CD4-positive, alpha-beta memory T cell (primary cell): ENCODE measurements at regions of chr5 and their contacts with region 1.

Region 1: DNA sequence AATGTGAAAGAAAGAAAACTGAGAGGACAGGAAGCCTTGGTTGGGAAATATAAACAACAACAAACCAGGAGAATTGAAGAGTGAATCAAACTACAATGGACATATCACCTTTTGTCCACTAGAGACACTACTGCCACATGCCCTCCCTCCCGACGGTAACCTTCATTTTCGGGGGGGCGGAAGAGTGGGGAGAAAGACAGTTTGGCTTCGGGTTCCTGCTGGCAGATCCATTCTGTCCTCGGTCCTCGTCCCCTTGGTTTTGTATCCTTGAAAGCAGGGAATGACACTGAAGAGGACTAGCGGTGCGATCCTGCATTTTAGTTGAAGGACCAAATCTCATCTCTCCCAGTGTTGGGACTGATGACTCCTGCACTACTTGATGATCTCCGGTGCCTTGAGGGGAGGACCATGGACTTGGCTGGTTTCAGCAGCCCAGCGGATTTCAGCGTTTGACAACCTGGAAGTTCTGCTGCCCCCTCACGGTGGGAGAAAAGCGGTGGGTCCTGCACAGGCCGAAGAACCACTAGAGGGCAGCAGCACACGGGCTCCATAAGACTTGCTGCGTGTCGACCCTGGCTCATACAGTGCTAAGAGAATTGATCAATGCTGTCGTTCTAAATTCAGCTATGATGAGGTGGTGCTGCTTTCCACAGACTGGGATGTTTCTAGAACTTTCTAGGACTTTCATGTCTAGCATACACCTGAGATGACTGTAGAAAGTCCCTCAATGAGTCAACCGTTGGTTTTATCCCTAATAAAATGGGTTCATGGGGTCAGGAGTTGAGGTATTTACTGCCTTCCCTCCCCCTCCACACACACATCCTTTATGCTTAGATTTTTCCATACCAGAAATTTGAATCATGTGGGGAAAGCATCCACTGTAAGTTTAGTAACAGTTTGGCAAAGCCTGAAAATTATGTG is 15.1 kb upstream of the ZNF131 start:
- DNase-seq: peak; percentile 87 to 90 (median 88)
- H3K4me3 ChIP-seq: peak overlapping the region; percentile 62 to 87
- H3K4me3 Mint-ChIP-seq: peak overlapping the region; percentile 85 to 94 (median 88)
- H3K27ac ChIP-seq: peak overlapping the region; percentile 44
- H3K27ac Mint-ChIP-seq: peak overlapping the region; percentile 84 to 94 (median 92)
- H3K4me1 ChIP-seq: peaks cover 43% of the 10 kb centered on the region
- H3K4me1 Mint-ChIP-seq: peaks cover 28 to 45% (median 37%) of the 10 kb centered on the region in 4 donors
- H3K27me3 ChIP-seq: no peaks in the 10 kb centered on the region
- H3K27me3 Mint-ChIP-seq: no peaks in the 10 kb centered on the region

Region 2: DNA sequence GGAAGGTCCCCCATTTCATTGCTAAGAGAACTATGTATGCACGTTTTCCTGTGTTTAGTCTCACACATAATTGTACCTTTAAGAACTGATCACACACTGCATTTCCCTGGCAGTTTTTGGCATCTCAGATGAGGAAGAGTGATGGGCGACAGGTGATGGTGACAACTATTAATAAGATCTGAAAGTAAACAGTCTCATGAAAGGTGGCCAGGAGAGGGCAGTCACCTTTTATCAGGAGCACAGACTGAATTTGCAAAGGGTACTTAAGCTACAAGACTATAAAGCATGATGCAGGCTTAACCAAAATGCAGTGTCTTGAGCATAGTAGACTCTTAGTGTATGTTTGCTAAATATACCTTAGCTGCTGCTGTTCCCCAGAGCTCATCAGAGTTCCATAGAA is 590.9 kb before region 1 on chr5:
- CTCF ChIA-PET with region 1: no interaction called
- POLR2A ChIA-PET with region 1: no interaction called
- intact Hi-C with region 1: no loop called
- DNase-seq: peak in 2 of 5 donors; percentile 1 to 6
- H3K4me3 ChIP-seq: no peak overlapping the region
- H3K4me3 Mint-ChIP-seq: no peak overlapping the region
- H3K27ac ChIP-seq: no peak overlapping the region
- H3K27ac Mint-ChIP-seq: no peak overlapping the region
- H3K4me1 ChIP-seq: no peaks in the 10 kb centered on the region
- H3K4me1 Mint-ChIP-seq: no peaks in the 10 kb centered on the region
- H3K27me3 ChIP-seq: no peaks in the 10 kb centered on the region
- H3K27me3 Mint-ChIP-seq: peaks cover 0 to 1% of the 10 kb centered on the region in 2 donors

Region 3: DNA sequence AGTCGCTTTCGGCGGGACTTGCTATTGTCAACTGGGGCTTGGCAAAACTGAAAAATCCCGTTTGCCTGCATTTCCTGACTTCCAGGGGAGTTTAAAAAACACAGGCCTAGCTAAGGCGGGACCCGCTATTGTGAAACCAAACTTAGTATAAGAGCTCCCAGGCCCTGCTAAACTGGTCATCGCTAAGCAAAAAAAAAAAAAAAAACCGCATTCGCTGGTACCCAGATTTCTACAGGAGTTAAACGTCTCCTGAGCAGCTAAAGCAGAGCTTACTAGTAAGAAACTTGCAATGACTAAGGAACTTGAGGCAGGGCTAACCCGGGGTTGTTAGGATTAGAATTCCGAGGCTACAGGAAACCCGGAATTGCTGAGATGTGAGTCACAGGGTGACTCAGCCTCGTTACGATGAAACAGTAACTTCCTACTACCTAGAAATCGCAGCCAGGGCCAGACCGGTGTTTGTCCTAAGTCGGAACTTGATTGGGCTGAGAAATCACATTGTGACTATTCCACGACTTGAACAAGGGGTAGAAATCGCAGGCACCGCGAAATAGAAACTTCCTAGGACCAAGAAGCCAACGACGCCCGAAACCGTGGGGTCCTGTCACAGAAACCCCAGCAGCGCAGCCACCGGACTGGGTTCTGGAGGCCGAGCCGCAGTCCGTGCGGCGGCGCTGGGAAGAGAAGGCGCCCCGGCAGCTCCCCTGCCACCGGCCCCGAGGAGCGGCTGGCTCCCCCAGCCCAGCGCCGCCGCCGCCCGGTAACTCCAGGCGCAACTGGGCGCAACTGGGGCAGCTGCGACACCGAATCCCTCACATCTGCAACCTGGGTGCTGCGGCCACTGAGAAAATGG is 155.0 kb before region 1 on chr5:
- CTCF ChIA-PET with region 1: interaction called, 10 read pairs
- POLR2A ChIA-PET with region 1: interaction called, 6 read pairs
- intact Hi-C with region 1: no loop called
- DNase-seq: peak; percentile 61 to 90 (median 66)
- H3K4me3 ChIP-seq: peak overlapping the region; percentile 83 to 90
- H3K4me3 Mint-ChIP-seq: peak overlapping the region; percentile 93 to 99 (median 98)
- H3K27ac ChIP-seq: peak overlapping the region; percentile 96
- H3K27ac Mint-ChIP-seq: peak overlapping the region; percentile 99 to 100 (median 100)
- H3K4me1 ChIP-seq: peaks cover 22% of the 10 kb centered on the region
- H3K4me1 Mint-ChIP-seq: peaks cover 7 to 42% (median 30%) of the 10 kb centered on the region in 4 donors
- H3K27me3 ChIP-seq: no peaks in the 10 kb centered on the region
- H3K27me3 Mint-ChIP-seq: no peaks in the 10 kb centered on the region

Region 4: GRCh38 chr5:43040287-43041098 is 65.1 kb before region 1 on chr5 and contains the start of gene ANXA2R:
- CTCF ChIA-PET with region 1: interaction called, 20 read pairs
- POLR2A ChIA-PET with region 1: interaction called, 19 read pairs
- intact Hi-C with region 1: loop called (anchors 1 kb)
- DNase-seq: peak; percentile 94 to 97 (median 97)
- H3K4me3 ChIP-seq: peak within 1 kb of the TSS; percentile 78 to 99
- H3K4me3 Mint-ChIP-seq: peak within 1 kb of the TSS; percentile 97 to 100 (median 98)
- H3K27ac ChIP-seq: peak within 1 kb of the TSS; percentile 98
- H3K27ac Mint-ChIP-seq: peak within 1 kb of the TSS; percentile 99 to 100 (median 99)
- H3K4me1 ChIP-seq: peaks cover 50% of the 10 kb centered on the region
- H3K4me1 Mint-ChIP-seq: peaks cover 19 to 82% (median 39%) of the 10 kb centered on the region in 4 donors
- H3K27me3 ChIP-seq: no peaks in the 10 kb centered on the region
- H3K27me3 Mint-ChIP-seq: no peaks in the 10 kb centered on the region
- total RNA-seq, gene ANXA2R: 43.4 to 47.8 TPM

Region 5: DNA sequence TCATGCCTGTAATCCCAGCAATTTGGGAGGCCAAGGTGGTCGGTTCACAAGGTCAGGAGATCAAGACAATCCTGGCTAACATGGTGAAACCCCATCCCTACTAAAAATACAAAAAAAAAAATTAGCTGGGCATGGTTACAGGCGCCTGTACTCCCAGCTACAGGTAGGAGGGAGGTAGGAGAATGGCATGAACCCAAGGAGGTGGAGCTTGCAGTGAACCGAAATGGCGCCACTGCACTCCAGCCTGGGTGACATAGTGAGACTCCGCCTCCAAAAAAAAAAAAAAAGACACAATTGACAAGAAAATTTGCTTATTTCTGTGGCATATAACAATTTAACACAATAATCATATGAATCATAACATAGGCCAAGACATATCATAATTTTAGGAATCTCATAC is 20.2 kb before region 1 on chr5:
- CTCF ChIA-PET with region 1: interaction called, 12 read pairs
- POLR2A ChIA-PET with region 1: no interaction called
- intact Hi-C with region 1: no loop called
- DNase-seq: no peak
- H3K4me3 ChIP-seq: no peak overlapping the region
- H3K4me3 Mint-ChIP-seq: no peak overlapping the region
- H3K27ac ChIP-seq: no peak overlapping the region
- H3K27ac Mint-ChIP-seq: no peak overlapping the region
- H3K4me1 ChIP-seq: no peaks in the 10 kb centered on the region
- H3K4me1 Mint-ChIP-seq: peaks cover 0 to 2% (median 0%) of the 10 kb centered on the region in 4 donors
- H3K27me3 ChIP-seq: no peaks in the 10 kb centered on the region
- H3K27me3 Mint-ChIP-seq: no peaks in the 10 kb centered on the region

Region 6: GRCh38 chr5:43389679-43390329 is 284.2 kb after region 1 on chr5:
- CTCF ChIA-PET with region 1: interaction called, 20 read pairs
- POLR2A ChIA-PET with region 1: no interaction called
- intact Hi-C with region 1: loop called (anchors 1 kb)
- DNase-seq: peak; percentile 45 to 56 (median 53)
- H3K4me3 ChIP-seq: no peak overlapping the region
- H3K4me3 Mint-ChIP-seq: no peak overlapping the region
- H3K27ac ChIP-seq: no peak overlapping the region
- H3K27ac Mint-ChIP-seq: peak overlapping the region in 3 of 7 donors; percentile 0 to 47 (median 31)
- H3K4me1 ChIP-seq: peaks cover 11% of the 10 kb centered on the region
- H3K4me1 Mint-ChIP-seq: peaks cover 6 to 30% (median 21%) of the 10 kb centered on the region in 4 donors
- H3K27me3 ChIP-seq: no peaks in the 10 kb centered on the region
- H3K27me3 Mint-ChIP-seq: no peaks in the 10 kb centered on the region